ENCODE measurements at regions of chr15 and their contacts with region 1.

Region 1: DNA sequence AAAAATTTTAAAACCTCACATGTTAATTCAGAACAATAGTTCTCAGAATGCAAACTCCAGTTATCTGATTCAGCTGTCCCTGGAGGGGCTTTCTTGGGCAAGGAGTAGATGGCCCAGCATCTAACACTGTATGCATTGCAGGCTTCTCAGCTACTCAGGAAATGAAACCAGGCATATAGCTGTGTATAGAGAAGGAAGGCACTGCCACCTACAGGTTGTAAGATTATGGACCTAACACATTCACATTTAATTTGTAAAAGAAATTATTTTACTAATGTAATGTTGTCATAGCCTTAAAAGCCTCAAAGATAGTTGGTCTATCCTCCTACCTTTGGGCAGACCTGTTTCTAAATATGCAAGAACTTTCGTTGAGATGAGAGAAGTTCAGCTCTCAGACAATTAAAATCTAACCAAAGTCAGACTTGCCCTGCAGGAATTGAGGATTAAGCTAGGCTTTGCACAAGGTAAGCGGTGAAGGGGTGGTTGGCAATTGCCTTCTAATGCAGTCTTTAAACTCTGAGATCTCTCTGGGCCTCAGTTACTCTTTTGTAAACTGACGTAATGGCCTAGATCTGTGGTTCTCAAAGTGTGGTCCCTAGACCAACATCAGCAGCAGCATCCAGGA is 132.8 kb upstream of the SLC24A5 start:
- DNase-seq: no peak
- H3K4me3 Mint-ChIP-seq: no peak overlapping the region
- H3K27ac Mint-ChIP-seq: no peak overlapping the region
- H3K4me1 Mint-ChIP-seq: peaks cover 6% of the 10 kb centered on the region
- H3K27me3 Mint-ChIP-seq: peaks cover 6% of the 10 kb centered on the region

Region 2: DNA sequence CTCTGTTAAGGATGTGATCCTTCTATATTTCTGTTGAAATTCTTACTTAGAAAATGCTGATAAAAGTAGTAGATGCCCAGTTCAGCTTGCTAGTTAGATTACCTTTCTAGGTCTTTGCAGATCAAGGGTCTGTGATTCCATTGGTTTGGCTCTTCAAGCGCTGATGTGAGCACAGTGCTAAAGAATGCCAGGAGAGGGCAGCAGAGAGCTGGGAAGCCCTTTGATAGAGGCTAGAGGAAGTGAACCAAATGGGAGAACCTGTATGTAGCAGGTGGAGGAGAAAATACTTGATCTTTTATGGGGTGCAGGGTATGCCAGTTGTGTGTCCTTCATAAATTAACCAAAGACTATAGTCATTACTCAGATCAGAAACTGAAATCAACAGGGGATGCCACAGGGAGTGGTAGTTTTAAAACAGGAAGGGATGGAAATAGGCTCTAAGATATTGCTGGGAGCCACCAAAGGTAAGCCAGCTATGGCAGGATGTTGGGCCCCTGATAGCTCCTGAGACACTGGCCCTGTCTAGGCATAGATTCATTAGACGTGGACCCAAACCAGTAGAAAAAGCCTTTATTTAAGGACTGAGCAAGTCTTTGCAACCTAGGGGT is 1675.8 kb before region 1 on chr15:
- intact Hi-C with region 1: loop called (anchors 5 kb)
- DNase-seq: peak; percentile 21
- H3K4me3 Mint-ChIP-seq: no peak overlapping the region
- H3K27ac Mint-ChIP-seq: no peak overlapping the region
- H3K4me1 Mint-ChIP-seq: no peaks in the 10 kb centered on the region
- H3K27me3 Mint-ChIP-seq: no peaks in the 10 kb centered on the region

Region 3: DNA sequence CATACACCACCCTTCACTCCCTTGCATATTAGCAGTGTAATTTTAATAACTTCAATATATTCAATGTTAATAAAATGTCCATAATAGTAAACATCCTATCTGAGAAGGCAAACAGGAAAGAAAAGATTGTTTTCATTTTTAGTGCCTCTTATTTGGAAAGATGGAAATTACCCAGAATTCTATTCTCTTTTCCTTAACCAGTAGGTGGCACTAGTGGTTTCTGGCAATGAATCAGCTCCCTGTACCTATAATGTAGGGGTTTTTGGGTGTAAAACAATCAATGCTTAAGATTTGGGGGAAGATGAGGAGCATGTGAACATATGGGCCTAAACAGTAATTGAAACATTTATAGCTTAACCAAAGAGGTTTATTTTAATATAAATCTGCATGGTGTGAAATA is 276.4 kb before region 1 on chr15:
- intact Hi-C with region 1: loop called (anchors 1 kb)
- DNase-seq: no peak
- H3K4me3 Mint-ChIP-seq: no peak overlapping the region
- H3K27ac Mint-ChIP-seq: no peak overlapping the region
- H3K4me1 Mint-ChIP-seq: no peaks in the 10 kb centered on the region
- H3K27me3 Mint-ChIP-seq: peaks cover 22% of the 10 kb centered on the region

Region 4: DNA sequence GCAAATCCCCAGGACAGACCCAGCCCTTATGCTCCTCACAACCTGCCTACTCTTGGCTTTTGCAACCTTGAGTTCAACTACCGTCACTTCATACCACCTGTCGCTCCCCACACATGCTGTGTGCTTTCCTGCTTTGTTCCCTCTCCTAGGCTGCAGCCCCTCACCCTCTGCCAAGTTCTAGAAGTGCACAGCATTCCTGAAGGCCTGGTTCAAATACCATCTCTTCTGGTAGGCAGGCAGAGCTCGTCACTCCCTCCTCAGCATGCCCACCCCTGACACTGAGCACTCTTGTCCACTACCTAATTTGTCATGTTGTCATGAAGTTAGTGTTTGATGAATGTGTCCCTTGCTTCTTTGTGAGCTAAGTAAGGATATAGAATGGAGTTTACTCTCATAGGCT is 141.1 kb before region 1 on chr15:
- intact Hi-C with region 1: no loop called
- DNase-seq: no peak
- H3K4me3 Mint-ChIP-seq: no peak overlapping the region
- H3K27ac Mint-ChIP-seq: no peak overlapping the region
- H3K4me1 Mint-ChIP-seq: no peaks in the 10 kb centered on the region
- H3K27me3 Mint-ChIP-seq: peaks cover 2% of the 10 kb centered on the region